ENCODE measurements at regions of chr10 and their contacts with region 1.

Region 1: GRCh38 chr10:71212318-71213126 is at the start of gene UNC5B:
- DNase-seq: peak; percentile 89 to 99 (median 92)

Region 2: DNA sequence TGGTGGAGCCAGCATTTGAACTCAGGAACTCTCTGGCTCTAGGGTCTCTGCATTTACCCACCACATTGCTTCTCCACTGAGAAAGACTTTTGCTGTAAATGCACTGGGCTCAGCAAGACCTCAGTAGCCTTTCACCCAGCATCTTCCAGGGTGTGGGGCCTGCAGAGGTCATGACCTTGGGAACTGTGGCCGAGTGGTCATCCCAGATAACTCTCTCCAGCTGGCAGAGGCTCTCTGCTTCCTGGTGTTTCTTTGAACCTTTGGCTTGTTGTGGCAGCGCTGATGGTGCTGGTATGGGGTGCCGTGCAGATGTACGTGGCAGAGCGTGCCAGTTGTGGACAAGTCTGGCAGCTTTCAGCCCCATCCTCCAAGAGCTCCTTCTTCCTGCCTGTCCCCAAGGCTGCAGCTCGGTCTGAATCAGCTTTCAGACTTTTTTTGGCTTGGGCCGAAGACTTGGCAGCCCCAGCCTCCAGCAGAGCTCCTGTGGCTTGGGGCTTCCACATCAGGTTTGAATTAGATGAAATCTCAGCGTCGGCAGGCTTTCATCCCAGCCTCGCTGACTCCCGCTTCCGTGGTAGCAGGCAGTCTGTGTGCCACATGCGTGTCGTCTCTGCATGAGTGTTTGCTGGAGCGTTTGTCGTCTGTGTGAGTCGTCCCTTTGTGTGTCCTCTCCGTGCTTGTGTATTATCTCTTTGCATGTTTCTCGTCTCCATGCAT is 518.7 kb before region 1 on chr10:
- intact Hi-C with region 1: no loop called
- DNase-seq: peak in 1 of 10 donors; percentile 79

Region 3: DNA sequence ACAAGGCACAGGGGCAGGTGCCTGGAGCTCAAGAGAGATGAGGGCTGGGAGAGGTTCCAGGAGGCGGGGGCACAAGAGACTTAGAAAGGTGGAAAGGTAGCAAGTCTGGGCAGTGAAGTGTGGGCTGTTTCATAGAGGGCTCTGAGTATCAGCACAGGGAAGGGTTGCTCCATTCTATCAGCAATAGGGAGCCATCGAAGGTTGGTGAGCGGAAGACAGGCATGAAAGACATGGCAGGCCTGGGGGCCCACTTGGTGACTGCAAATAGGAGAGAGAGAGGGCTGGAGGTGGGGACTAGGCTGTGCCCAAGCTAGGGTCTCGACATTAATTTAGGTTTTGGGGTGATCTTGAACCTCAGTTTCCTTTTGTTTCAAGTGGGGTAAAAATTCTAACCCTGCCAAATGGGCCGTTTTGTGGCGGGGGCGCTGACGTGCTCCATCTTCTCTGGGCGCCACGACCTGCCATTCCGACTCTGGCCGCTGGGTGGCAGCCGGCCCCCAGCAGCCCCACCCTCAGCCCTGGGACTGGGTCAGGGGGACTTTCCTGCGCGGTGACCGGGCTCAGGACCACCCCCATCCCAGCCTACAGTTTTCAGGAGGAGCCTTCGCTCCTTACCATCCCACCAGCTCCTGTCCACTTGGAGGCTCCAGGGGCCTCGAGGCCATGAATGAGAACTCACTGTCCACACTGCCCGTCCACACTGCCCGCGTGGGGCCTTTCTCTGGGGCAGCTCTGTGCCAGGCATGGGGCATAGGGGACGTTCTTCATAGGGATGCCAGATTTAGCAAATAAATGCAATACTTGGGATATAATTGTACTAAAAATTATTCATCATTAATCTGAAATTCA is 286.9 kb before region 1 on chr10:
- intact Hi-C with region 1: loop called (anchors 1 kb)
- DNase-seq: peak in 7 of 10 donors; percentile 36 to 93 (median 62)

Region 4: DNA sequence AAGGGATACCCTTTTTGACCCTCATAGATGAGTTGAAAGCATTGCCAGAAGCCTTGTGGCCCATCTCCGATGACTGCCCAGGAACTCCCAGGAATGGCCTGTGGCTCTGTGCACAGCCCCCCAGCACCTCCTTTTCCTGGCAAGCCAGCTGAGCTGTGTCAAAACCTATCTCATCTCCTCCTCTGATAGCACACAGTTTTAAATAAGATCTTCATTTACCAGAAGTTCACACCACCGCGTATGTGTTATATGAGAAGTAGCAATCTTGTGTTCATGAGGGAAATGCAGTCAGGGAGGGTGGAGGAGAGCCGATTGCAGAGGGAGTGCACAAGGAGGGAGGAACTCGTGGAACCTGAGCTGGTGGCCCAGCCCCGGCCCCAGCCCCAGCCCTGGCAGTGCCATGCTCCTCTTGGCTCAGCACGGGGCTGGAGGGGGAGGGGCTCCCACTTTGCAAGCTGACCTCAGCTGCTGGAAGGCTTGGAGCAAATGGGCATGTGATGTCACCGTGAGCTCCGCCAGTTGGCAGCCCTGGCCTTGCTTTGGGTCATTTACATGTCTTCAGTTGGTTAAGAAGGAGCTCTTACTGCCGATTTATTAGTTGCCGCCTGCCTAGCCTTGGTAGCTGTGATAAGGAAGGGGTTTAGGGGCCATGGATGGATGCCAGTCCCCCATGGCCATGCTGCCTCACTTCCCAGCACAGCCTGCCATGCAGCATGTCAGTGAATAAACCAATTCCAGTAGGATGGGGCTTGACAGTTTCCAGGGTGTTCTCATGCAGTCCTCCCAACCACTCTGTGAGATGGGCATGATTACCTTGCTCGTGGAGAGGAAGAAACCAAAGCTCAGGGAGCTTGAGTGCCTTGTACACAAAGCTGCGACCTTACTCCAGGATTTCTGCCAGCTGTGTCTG is 19.8 kb after region 1 on chr10:
- intact Hi-C with region 1: loop called (anchors 2 kb)
- DNase-seq: peak; percentile 90 to 99 (median 96)

Region 5: GRCh38 chr10:71268247-71268691 is 55.7 kb after region 1 on chr10:
- intact Hi-C with region 1: loop called (anchors 1 kb)
- DNase-seq: peak in 7 of 10 donors; percentile 54 to 93 (median 63)

Region 6: GRCh38 chr10:71285180-71285545 is 72.6 kb after region 1 on chr10:
- intact Hi-C with region 1: loop called (anchors 1 kb)
- DNase-seq: peak in 8 of 10 donors; percentile 57 to 94 (median 68)